B cell (primary cell): ENCODE measurements at regions of chr3 and their contacts with region 1.

Region 1: DNA sequence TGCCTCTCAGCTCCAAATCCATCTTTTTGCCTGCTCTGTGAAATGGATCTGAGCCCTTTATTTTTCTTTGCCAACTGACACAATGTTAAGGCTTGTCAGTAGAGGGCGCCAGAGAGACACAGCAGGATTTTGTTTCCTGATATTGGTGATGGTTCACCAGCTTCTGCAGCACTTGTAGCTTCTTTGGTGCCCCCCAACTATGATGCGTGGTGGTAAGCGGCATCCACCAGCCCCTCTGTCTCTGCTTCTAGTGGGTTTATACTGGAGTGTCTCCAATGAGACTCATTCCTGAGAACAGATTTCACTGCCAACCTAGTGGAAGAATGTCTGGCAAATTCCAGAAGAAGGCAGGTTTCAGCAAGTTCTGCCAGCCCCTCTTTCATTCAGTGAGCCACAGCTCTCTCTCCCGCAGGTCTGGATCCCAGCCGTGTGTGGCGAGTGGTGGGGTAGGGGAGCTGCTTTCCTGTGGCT is 471.9 kb upstream of the FRG2C start:
- DNase-seq: peak; percentile 24
- ATAC-seq: no peak
- H3K4me3 ChIP-seq: no peak overlapping the region
- H3K4me3 Mint-ChIP-seq: no peak overlapping the region
- H3K27ac ChIP-seq: no peak overlapping the region
- H3K27ac Mint-ChIP-seq: no peak overlapping the region
- H3K4me1 ChIP-seq: no peaks in the 10 kb centered on the region
- H3K4me1 Mint-ChIP-seq: no peaks in the 10 kb centered on the region
- H3K27me3 ChIP-seq: no peaks in the 10 kb centered on the region
- H3K27me3 Mint-ChIP-seq: no peaks in the 10 kb centered on the region
- CTCF ChIP-seq: peak; percentile 68

Region 2: GRCh38 chr3:75078290-75078689 is 113.9 kb before region 1 on chr3:
- CTCF ChIA-PET with region 1: no interaction called
- POLR2A ChIA-PET with region 1: no interaction called
- intact Hi-C with region 1: no loop called
- DNase-seq: no peak
- ATAC-seq: no peak
- H3K4me3 ChIP-seq: no peak overlapping the region
- H3K4me3 Mint-ChIP-seq: no peak overlapping the region
- H3K27ac ChIP-seq: no peak overlapping the region
- H3K27ac Mint-ChIP-seq: no peak overlapping the region
- H3K4me1 ChIP-seq: no peaks in the 10 kb centered on the region
- H3K4me1 Mint-ChIP-seq: no peaks in the 10 kb centered on the region
- H3K27me3 ChIP-seq: no peaks in the 10 kb centered on the region
- H3K27me3 Mint-ChIP-seq: no peaks in the 10 kb centered on the region
- CTCF ChIP-seq: no peak

Region 3: GRCh38 chr3:75180235-75180944 is 11.8 kb before region 1 on chr3:
- CTCF ChIA-PET with region 1: interaction called, 10 read pairs
- POLR2A ChIA-PET with region 1: no interaction called
- intact Hi-C with region 1: no loop called
- DNase-seq: no peak
- ATAC-seq: no peak
- H3K4me3 ChIP-seq: no peak overlapping the region
- H3K4me3 Mint-ChIP-seq: no peak overlapping the region
- H3K27ac ChIP-seq: no peak overlapping the region
- H3K27ac Mint-ChIP-seq: no peak overlapping the region
- H3K4me1 ChIP-seq: no peaks in the 10 kb centered on the region
- H3K4me1 Mint-ChIP-seq: peaks cover 3% of the 10 kb centered on the region
- H3K27me3 ChIP-seq: no peaks in the 10 kb centered on the region
- H3K27me3 Mint-ChIP-seq: no peaks in the 10 kb centered on the region
- CTCF ChIP-seq: no peak

Region 4: DNA sequence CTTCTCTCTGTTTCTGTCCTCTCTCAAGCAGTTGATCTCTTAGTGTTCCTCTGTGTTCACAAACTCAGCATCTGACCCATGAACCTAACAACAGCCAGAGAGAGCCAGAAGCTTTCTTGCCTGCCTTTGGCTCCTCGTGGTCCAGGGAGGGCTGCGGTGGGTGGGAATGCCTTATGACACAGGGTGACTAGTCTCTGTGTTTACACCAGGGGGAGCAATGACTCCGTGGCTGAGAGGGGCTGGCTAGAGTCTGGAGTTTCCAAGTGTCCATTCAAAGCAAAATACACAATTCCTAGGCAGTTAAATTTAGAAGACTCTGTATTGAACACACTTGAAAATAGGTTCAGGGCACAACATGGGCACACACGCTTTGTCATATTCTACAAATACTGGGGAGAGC is 101.9 kb after region 1 on chr3:
- CTCF ChIA-PET with region 1: no interaction called
- POLR2A ChIA-PET with region 1: no interaction called
- intact Hi-C with region 1: no loop called
- DNase-seq: no peak
- ATAC-seq: no peak
- H3K4me3 ChIP-seq: no peak overlapping the region
- H3K4me3 Mint-ChIP-seq: no peak overlapping the region
- H3K27ac ChIP-seq: no peak overlapping the region
- H3K27ac Mint-ChIP-seq: no peak overlapping the region
- H3K4me1 ChIP-seq: no peaks in the 10 kb centered on the region
- H3K4me1 Mint-ChIP-seq: no peaks in the 10 kb centered on the region
- H3K27me3 ChIP-seq: no peaks in the 10 kb centered on the region
- H3K27me3 Mint-ChIP-seq: no peaks in the 10 kb centered on the region
- CTCF ChIP-seq: no peak